ENCODE measurements at regions of chr3 and their contacts with region 1.

Region 1: DNA sequence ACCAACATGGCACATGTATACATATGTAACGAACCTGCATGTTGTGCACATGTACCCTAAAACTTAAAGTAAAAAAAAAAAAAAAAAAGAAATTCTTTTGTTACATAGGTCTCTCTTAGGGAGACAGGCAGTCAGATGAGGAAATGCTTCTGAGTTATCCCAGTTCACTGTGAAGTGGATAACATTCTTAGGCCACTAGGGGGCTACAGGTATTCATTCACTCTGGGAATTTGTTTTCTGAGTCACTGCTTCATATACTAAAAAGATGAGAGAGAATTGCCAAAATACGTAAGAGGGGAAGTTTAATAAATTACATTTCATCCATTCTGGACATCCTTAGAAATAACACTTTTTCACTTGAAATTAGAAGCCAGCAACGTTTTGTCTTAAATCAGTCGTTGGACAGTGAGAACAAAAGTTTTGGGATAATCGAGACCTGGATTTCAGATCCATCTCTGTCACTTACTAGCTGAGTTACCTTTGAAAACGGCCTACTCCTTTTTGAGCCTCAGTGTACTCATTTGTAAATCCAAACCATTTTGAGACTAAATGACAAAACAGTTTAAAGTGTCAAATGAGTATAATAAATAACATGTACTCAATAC is 738.4 kb upstream of the ALCAM start:
- DNase-seq: peak; percentile 57
- H3K4me3 ChIP-seq: no peak overlapping the region
- H3K27ac ChIP-seq: no peak overlapping the region
- H3K4me1 ChIP-seq: no peaks in the 10 kb centered on the region
- CTCF ChIP-seq: peak; percentile 80

Region 2: DNA sequence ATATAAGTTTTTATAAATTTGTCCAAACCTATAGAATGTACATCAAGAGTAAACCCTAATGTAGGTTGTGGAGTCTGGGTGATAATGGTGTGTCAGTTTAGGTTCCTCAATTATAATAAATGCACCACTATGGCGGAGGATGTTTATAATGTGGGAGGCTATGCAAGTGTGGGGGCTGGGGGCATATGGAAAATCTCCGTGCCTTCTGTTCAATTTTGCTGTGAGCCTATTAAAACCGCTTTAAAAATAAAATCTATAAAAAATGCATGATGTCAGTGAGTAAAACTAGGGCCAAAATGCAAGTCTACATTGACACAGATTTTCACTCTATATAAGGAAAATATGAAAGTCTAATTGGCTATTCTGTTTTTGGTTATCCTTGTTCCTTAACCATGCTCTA is 36.5 kb before region 1 on chr3:
- CTCF ChIA-PET with region 1: no interaction called
- POLR2A ChIA-PET with region 1: no interaction called
- intact Hi-C with region 1: loop called (anchors 1 kb)
- DNase-seq: no peak
- H3K4me3 ChIP-seq: no peak overlapping the region
- H3K27ac ChIP-seq: no peak overlapping the region
- H3K4me1 ChIP-seq: no peaks in the 10 kb centered on the region
- CTCF ChIP-seq: no peak